ENCODE measurements at regions of chr11 and their contacts with region 1.

Region 1: GRCh38 chr11:123301696-123302400 is 106.8 kb upstream of the CLMP start:
- DNase-seq: peak; percentile 32
- ATAC-seq: peak; percentile 83
- H3K4me3 ChIP-seq: peak overlapping the region; percentile 62; the same call in 1 of the 2 replicates
- H3K27ac ChIP-seq: peak overlapping the region; percentile 75
- H3K4me1 ChIP-seq: peaks cover 29% of the 10 kb centered on the region
- H3K27me3 ChIP-seq: no peaks in the 10 kb centered on the region
- CTCF ChIP-seq: peak; percentile 76 to 93 (median 84); a peak in 5 of 6 replicates
- EP300 ChIP-seq: no peak
- POLR2A ChIP-seq: no peak; the same call in 1 of the 2 replicates
- RAD21 ChIP-seq: peak; percentile 86

Region 2: DNA sequence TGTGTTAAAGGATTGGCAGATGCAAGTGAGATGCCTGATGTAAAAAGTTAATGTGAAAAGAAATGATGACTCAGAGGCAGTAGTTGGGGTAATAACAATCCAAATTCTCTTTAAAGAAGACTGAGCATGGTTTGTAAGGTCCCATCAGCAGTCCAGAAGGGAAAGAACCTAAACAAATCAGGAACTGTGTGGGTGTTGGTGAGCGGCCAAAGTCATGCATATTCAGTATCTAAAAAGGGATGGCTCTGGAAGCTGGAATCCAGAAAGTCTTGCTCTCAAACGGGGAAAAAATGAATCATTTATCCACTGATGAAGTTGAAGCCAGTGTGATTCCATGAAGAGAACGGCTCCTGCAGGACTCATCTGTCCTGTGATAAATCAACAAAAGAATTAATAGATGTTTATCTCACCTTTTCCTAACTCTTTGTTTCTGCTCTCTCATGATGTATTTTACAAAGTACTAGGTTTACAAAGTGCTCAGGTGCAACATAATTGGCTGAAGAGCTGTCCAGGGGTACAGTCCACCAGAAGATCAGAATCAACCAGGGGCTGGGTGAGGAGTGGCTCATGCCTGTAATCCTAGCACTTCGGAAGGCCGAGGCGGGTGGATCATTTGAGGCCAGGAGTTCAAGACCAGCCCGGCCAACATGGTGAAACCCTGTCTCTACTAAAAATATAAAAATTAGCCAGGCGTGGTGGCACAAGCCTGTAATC is 1828.6 kb before region 1 on chr11:
- CTCF ChIA-PET with region 1: no interaction called
- POLR2A ChIA-PET with region 1: no interaction called
- RAD21 ChIA-PET with region 1: no interaction called
- SMC1A ChIA-PET with region 1: no interaction called
- in situ Hi-C with region 1: no loop called
- intact Hi-C with region 1: no loop called
- DNase-seq: no peak
- ATAC-seq: no peak
- H3K4me3 ChIP-seq: no peak overlapping the region
- H3K27ac ChIP-seq: no peak overlapping the region
- H3K4me1 ChIP-seq: peaks cover 31% of the 10 kb centered on the region
- H3K27me3 ChIP-seq: no peaks in the 10 kb centered on the region
- CTCF ChIP-seq: no peak
- EP300 ChIP-seq: no peak
- POLR2A ChIP-seq: no peak
- RAD21 ChIP-seq: no peak

Region 3: DNA sequence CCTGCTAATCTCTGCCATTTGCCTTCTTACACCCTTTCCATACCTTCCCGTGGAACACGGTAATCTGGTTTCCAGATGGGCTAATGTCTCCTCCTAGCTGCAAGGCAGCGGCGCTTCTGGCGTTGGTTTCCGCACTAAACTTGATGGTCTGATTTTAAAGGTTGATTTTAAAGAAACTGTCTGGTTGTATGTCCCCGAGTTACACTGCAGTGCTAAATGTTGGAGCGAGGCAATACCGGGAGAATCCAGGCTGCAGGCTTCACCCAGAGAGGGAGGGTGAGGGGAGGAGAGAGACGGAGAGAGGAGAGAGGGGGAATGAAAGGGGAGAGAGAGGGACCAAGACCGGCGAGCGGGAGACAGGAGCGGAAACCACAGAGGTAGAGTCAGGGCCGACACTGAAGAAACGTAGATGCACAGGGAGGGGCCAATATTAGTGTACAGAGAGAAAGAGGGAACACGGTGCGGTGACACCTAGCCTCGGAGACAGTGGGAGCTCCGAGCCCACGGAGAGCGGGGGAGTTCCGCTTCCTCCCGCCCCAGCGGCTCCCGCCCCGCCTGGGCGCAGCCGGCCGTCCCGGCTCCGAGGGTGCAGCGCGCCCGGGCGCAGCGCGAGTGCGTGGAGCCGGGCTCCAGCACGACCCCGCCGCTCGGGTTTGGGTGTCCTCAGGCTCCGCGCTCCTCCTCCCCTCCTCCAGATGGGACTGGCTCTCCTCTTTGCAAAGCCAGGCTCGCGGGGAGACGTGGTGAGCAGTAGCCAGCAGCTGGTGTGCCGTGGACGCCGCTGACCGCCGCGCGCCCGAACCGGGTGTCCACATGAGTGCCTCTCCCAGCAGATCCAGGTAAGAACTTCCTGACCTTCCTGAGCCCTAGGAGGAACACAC is 56.4 kb after region 1 on chr11:
- CTCF ChIA-PET with region 1: interaction called, 41 read pairs
- POLR2A ChIA-PET with region 1: interaction called, 4 read pairs
- RAD21 ChIA-PET with region 1: interaction called, 26 read pairs
- SMC1A ChIA-PET with region 1: interaction called, 11 read pairs
- in situ Hi-C with region 1: no loop called
- intact Hi-C with region 1: loop called (anchors 1 kb)
- DNase-seq: peak; percentile 34
- ATAC-seq: peak; percentile 80
- H3K4me3 ChIP-seq: peak overlapping the region; percentile 91
- H3K27ac ChIP-seq: peak overlapping the region; percentile 27; the same call in 1 of the 2 replicates
- H3K4me1 ChIP-seq: peaks cover 7% of the 10 kb centered on the region; the same call in 1 of the 2 replicates
- H3K27me3 ChIP-seq: no peaks in the 10 kb centered on the region
- CTCF ChIP-seq: peak; percentile 20 to 43 (median 27); a peak in 4 of 6 replicates
- EP300 ChIP-seq: no peak
- POLR2A ChIP-seq: peak; percentile 76
- RAD21 ChIP-seq: peak; percentile 56

Region 4: GRCh38 chr11:123381817-123382554 is 80.1 kb after region 1 on chr11:
- CTCF ChIA-PET with region 1: interaction called, 6 read pairs
- POLR2A ChIA-PET with region 1: no interaction called
- RAD21 ChIA-PET with region 1: interaction called, 9 read pairs
- SMC1A ChIA-PET with region 1: interaction called, 5 read pairs
- in situ Hi-C with region 1: no loop called
- intact Hi-C with region 1: loop called (anchors 1 kb)
- DNase-seq: peak; percentile 92
- ATAC-seq: peak; percentile 91
- H3K4me3 ChIP-seq: peak overlapping the region; percentile 10; the same call in 1 of the 2 replicates
- H3K27ac ChIP-seq: peak overlapping the region; percentile 98
- H3K4me1 ChIP-seq: peaks cover 51% of the 10 kb centered on the region
- H3K27me3 ChIP-seq: no peaks in the 10 kb centered on the region
- CTCF ChIP-seq: no peak
- EP300 ChIP-seq: peak; percentile 44 to 68; a peak in 2 of 4 replicates
- POLR2A ChIP-seq: no peak
- RAD21 ChIP-seq: no peak

Region 5: GRCh38 chr11:123429913-123430720 is 128.3 kb after region 1 on chr11 and contains the start of gene GRAMD1B:
- CTCF ChIA-PET with region 1: interaction called, 13 read pairs
- POLR2A ChIA-PET with region 1: no interaction called
- RAD21 ChIA-PET with region 1: interaction called, 5 read pairs
- SMC1A ChIA-PET with region 1: interaction called, 19 read pairs
- in situ Hi-C with region 1: no loop called
- intact Hi-C with region 1: loop called (anchors 1 kb)
- DNase-seq: no peak
- ATAC-seq: peak; percentile 78
- H3K4me3 ChIP-seq: peak within 1 kb of the TSS; percentile 87
- H3K27ac ChIP-seq: peak within 1 kb of the TSS; percentile 40
- H3K4me1 ChIP-seq: peaks cover 3% of the 10 kb centered on the region
- H3K27me3 ChIP-seq: no peaks in the 10 kb centered on the region
- CTCF ChIP-seq: peak; percentile 19 to 29 (median 28); a peak in 3 of 6 replicates
- EP300 ChIP-seq: no peak
- POLR2A ChIP-seq: no peak; the same call in 1 of the 2 replicates
- RAD21 ChIP-seq: no peak
- polyA plus RNA-seq, gene GRAMD1B: 1.9 to 3.5 TPM

Region 6: GRCh38 chr11:123741159-123742028 is 439.5 kb after region 1 on chr11 and contains the start of gene ZNF202:
- CTCF ChIA-PET with region 1: no interaction called
- POLR2A ChIA-PET with region 1: no interaction called
- RAD21 ChIA-PET with region 1: no interaction called
- SMC1A ChIA-PET with region 1: no interaction called
- in situ Hi-C with region 1: no loop called
- intact Hi-C with region 1: no loop called
- DNase-seq: peak; percentile 57
- ATAC-seq: peak; percentile 96
- H3K4me3 ChIP-seq: peak within 1 kb of the TSS; percentile 86
- H3K27ac ChIP-seq: peak within 1 kb of the TSS; percentile 43
- H3K4me1 ChIP-seq: peaks cover 3% of the 10 kb centered on the region; the same call in 1 of the 2 replicates
- H3K27me3 ChIP-seq: no peaks in the 10 kb centered on the region
- CTCF ChIP-seq: no peak
- EP300 ChIP-seq: no peak
- POLR2A ChIP-seq: peak; percentile 87
- RAD21 ChIP-seq: no peak
- polyA plus RNA-seq, gene ZNF202: 2.6 to 2.8 TPM

Measured in GM12878 (cell line).